K562 (cell line): ENCODE measurements at regions of chr21 and their contacts with region 1.

Region 1: DNA sequence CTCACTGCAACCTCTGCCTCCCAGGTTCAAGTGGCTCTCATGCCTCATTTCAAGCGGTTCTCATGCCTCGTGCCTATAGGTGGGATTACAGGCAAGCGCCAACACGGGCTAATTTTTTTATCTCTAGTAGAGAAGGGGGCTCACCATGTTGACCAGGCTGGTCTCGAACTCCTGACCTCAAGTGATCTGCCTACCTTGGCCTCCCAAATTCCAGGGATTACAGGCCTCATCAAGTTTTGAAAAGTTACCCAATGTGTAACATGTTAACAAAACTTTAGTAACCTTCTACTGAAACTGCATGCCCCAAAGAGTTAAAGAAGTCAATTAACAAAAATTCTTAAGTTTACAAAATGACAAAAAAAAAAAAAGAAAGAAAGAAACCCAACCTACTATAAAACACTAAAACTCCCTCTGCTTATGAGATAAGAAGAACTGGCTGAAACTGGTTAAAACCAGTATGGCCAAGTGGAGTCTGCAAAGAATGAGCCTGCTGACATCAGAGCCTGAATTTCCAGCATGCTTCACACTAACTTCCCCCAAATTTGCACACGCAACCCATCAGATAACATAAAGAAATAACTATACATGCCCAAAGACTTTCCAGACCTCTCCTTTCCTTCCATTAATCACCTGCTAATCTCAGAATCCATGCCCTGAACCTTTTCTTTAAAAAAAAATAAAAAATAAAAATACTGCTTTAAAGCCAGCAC is 25.5 kb upstream of the PSMG1 start:
- DNase-seq: peak; percentile 27 to 81 (median 48)
- ATAC-seq: peak; percentile 88
- H3K4me3 ChIP-seq: no peak overlapping the region
- H3K27ac ChIP-seq: peak overlapping the region; percentile 65
- H3K4me1 ChIP-seq: peaks cover 0 to 12% of the 10 kb centered on the region in 2 experiments; a peak in 3 of 5 replicates
- H3K27me3 ChIP-seq: no peaks in the 10 kb centered on the region
- CTCF ChIP-seq: no peak
- EP300 ChIP-seq: peak; percentile 64; the same call in 1 of the 2 replicates
- POLR2A ChIP-seq: no peak
- RAD21 ChIP-seq: no peak

Region 2: DNA sequence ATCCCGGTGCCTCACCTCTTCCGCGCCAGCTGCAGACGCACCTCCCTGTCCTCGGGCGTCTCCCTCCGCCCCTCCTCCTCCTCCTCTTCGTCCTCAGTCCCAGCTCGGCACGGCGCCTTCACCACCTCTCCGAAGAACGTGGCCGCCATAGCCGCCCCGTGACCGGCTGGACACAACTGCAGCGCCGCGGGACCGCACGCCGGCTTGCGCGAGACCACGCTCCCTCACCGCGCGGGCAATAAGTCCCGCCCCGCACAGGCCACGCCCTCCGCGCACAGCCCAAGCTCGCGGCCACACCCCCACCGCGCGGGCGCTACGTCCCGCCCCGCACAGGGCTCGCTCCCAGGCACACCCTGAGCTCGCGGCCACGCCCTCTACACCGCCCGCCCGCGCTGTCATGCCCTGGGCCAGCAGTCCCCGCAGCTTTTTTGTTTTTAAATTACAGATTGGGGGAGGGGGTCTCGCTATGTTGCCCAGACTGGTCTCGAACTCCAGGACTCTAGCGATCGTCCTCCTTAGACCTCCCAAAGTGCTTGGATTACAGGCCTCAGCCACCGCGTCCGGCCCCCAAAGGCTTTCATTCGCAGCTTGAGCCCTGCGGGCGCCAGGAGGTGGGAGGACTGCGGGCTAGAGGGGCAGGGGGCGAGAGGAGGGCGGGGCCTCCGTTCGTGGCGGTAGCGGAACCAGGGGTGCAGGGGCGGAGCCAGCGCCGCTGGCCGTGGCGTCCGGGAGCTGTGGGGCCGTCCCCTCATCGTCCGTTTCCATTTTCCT is 25.4 kb before region 1 on chr21 and contains the start of gene PSMG1:
- CTCF ChIA-PET with region 1: no interaction called
- POLR2A ChIA-PET with region 1: interaction called, 4 read pairs
- in situ Hi-C with region 1: no loop called
- intact Hi-C with region 1: loop called (anchors 2 kb)
- DNase-seq: peak; percentile 95 to 99 (median 96)
- ATAC-seq: peak; percentile 92
- H3K4me3 ChIP-seq: peak within 1 kb of the TSS; percentile 82
- H3K27ac ChIP-seq: peak within 1 kb of the TSS; percentile 93
- H3K4me1 ChIP-seq: peaks cover 8 to 11% of the 10 kb centered on the region in 2 experiments; a peak in 4 of 5 replicates
- H3K27me3 ChIP-seq: no peaks in the 10 kb centered on the region
- CTCF ChIP-seq: no peak
- EP300 ChIP-seq: no peak
- POLR2A ChIP-seq: peak; percentile 97
- RAD21 ChIP-seq: no peak
- polyA plus RNA-seq, gene PSMG1: 54.5 to 88.1 TPM

Region 3: GRCh38 chr21:39221282-39221996 is 12.7 kb after region 1 on chr21:
- CTCF ChIA-PET with region 1: no interaction called
- POLR2A ChIA-PET with region 1: interaction called, 10 read pairs
- in situ Hi-C with region 1: no loop called
- intact Hi-C with region 1: no loop called
- DNase-seq: no peak
- ATAC-seq: no peak
- H3K4me3 ChIP-seq: no peak overlapping the region
- H3K27ac ChIP-seq: no peak overlapping the region
- H3K4me1 ChIP-seq: no peaks in the 10 kb centered on the region
- H3K27me3 ChIP-seq: no peaks in the 10 kb centered on the region
- CTCF ChIP-seq: no peak
- EP300 ChIP-seq: no peak
- POLR2A ChIP-seq: no peak
- RAD21 ChIP-seq: no peak